ENCODE measurements at regions of chr14 and their contacts with region 1.

Region 1: GRCh38 chr14:76876076-76876475 is 49.9 kb downstream of the LRRC74A start:
- DNase-seq: peak; percentile 54
- H3K4me3 ChIP-seq: no peak overlapping the region
- H3K27ac ChIP-seq: no peak overlapping the region
- H3K4me1 ChIP-seq: no peaks in the 10 kb centered on the region
- CTCF ChIP-seq: peak; percentile 87

Region 2: GRCh38 chr14:76904740-76905438 is 28.8 kb after region 1 on chr14:
- CTCF ChIA-PET with region 1: no interaction called
- POLR2A ChIA-PET with region 1: interaction called, 3 read pairs
- intact Hi-C with region 1: loop called (anchors 2 kb)
- DNase-seq: peak; percentile 83
- H3K4me3 ChIP-seq: no peak overlapping the region
- H3K27ac ChIP-seq: no peak overlapping the region
- H3K4me1 ChIP-seq: peaks cover 24% of the 10 kb centered on the region
- CTCF ChIP-seq: no peak

Region 3: GRCh38 chr14:76918751-76919543 is 42.9 kb after region 1 on chr14:
- CTCF ChIA-PET with region 1: interaction called, 4 read pairs
- POLR2A ChIA-PET with region 1: interaction called, 4 read pairs
- intact Hi-C with region 1: loop called (anchors 1 kb)
- DNase-seq: no peak
- H3K4me3 ChIP-seq: no peak overlapping the region
- H3K27ac ChIP-seq: no peak overlapping the region
- H3K4me1 ChIP-seq: peaks cover 3% of the 10 kb centered on the region
- CTCF ChIP-seq: no peak; the same call in 1 of the 2 replicates

Region 4: GRCh38 chr14:77067632-77068514 is 191.8 kb after region 1 on chr14:
- CTCF ChIA-PET with region 1: interaction called, 15 read pairs
- POLR2A ChIA-PET with region 1: interaction called, 6 read pairs
- intact Hi-C with region 1: loop called (anchors 1 kb)
- DNase-seq: peak; percentile 61
- H3K4me3 ChIP-seq: no peak overlapping the region
- H3K27ac ChIP-seq: no peak overlapping the region
- H3K4me1 ChIP-seq: no peaks in the 10 kb centered on the region
- CTCF ChIP-seq: peak; percentile 91

Measured in OCI-LY7 (cell line).